Right ventricle myocardium inferior (tissue), 1 donor: ENCODE measurements at regions of chr4 and their contacts with region 1.

Region 1: GRCh38 chr4:62709618-62710252 is 1509.6 kb downstream of the ADGRL3 start:
- DNase-seq: no peak
- ATAC-seq: peak; percentile 46

Region 2: GRCh38 chr4:62591756-62592155 is 118.0 kb before region 1 on chr4:
- intact Hi-C with region 1: loop called (anchors 2 kb)
- DNase-seq: no peak
- ATAC-seq: no peak